A673 (cell line): ENCODE measurements at regions of chr1 and their contacts with region 1.

Region 1: DNA sequence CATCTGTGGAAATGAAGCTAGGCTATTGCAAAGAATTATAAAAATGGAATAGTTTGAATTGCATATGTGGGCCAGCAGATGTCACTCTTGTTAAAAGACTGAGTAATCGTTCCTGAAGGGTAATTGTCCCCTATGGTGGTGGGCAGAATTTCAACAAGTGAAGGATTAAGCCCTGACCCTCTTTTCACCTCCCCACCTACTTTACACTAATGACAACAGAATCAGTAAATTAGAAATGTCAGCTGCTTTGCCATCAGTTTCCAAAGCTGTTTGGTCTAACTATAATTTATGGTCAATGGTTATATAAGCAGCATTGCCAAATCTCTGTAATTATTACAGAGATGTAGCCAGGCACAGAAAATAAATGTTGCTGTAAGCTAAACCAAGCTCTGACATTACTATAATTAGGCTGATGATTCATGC is 898.6 kb downstream of the AMY1C start:
- DNase-seq: peak; percentile 65
- H3K4me3 ChIP-seq: no peak overlapping the region
- H3K27ac ChIP-seq: no peak overlapping the region
- H3K4me1 ChIP-seq: no peaks in the 10 kb centered on the region
- H3K27me3 ChIP-seq: no peaks in the 10 kb centered on the region
- CTCF ChIP-seq: peak; percentile 66

Region 2: GRCh38 chr1:103948526-103948925 is 699.8 kb before region 1 on chr1:
- CTCF ChIA-PET with region 1: no interaction called
- POLR2A ChIA-PET with region 1: no interaction called
- intact Hi-C with region 1: loop called (anchors 10 kb)
- DNase-seq: peak; percentile 18
- H3K4me3 ChIP-seq: no peak overlapping the region
- H3K27ac ChIP-seq: no peak overlapping the region
- H3K4me1 ChIP-seq: no peaks in the 10 kb centered on the region
- H3K27me3 ChIP-seq: no peaks in the 10 kb centered on the region
- CTCF ChIP-seq: peak; percentile 56; the same call in 1 of the 2 replicates

Region 3: DNA sequence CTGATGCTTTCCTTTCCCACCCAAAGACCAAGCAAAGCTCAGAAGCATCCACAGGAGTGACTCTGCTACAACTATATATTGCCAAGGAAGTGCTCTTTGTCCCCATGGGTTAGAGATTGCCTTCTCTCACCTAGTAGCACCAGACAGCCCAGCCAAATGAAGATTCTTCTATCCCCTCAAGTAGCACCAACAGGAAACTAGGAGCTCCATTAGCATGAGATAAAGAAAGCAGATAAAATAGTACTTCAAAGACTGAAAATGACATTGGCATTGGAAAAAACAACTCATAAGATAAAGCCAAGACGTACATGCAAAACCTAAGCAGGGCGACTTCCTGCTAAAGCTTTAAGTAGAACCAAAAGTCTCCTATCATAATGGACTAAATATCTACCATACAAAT is 27.1 kb before region 1 on chr1:
- CTCF ChIA-PET with region 1: no interaction called
- POLR2A ChIA-PET with region 1: no interaction called
- intact Hi-C with region 1: no loop called
- DNase-seq: no peak
- H3K4me3 ChIP-seq: no peak overlapping the region
- H3K27ac ChIP-seq: no peak overlapping the region
- H3K4me1 ChIP-seq: no peaks in the 10 kb centered on the region
- H3K27me3 ChIP-seq: no peaks in the 10 kb centered on the region
- CTCF ChIP-seq: no peak

Region 4: GRCh38 chr1:105419030-105419429 is 770.8 kb after region 1 on chr1:
- CTCF ChIA-PET with region 1: no interaction called
- POLR2A ChIA-PET with region 1: no interaction called
- intact Hi-C with region 1: no loop called
- DNase-seq: no peak
- H3K4me3 ChIP-seq: no peak overlapping the region
- H3K27ac ChIP-seq: no peak overlapping the region
- H3K4me1 ChIP-seq: no peaks in the 10 kb centered on the region
- H3K27me3 ChIP-seq: no peaks in the 10 kb centered on the region
- CTCF ChIP-seq: no peak